ENCODE measurements at regions of chr16 and their contacts with region 1.

Region 1: DNA sequence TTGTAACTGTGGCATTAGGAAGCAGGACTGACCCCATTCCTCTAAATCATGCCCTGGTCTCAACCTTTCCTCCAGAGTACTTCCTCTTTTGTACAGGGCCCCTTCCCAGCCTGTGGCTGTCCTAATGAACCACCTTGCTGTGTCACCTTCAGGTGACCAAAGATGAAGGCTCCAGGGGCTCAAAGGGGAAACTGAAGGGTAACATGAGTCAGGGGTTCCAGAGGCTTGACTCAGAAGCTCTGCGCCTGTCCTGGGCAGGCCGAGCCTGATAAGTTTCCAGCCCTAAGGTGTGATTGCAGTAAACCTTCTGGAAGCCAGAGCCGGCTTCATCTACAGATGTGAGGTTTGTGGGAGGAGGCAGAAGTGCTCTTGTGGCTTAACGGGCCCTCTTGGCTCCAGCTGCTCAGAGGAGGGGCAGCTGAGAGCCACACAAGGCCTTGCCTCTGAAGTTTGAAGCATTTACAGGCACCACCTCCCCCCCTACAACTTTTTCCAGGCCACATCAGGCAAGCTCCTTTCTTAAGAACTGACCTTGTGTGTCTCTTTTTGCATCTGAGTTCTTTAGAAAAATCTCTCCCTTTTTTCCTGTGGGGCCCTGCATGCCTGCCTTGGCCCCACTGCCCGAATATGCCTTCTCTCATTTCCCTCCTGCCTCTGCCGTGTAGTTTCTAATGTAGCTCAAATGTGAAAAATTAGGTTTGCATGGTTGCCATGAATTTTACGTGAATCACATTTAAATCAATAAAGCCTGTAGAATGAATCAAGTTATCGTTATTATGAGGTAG is 149.9 kb downstream of the CLEC16A start:
- DNase-seq: peak; percentile 87
- ATAC-seq: peak; percentile 77
- H3K4me3 Mint-ChIP-seq: peak overlapping the region; percentile 53
- H3K27ac Mint-ChIP-seq: peak overlapping the region; percentile 99
- H3K4me1 Mint-ChIP-seq: peaks cover 86% of the 10 kb centered on the region
- H3K27me3 Mint-ChIP-seq: no peaks in the 10 kb centered on the region

Region 2: DNA sequence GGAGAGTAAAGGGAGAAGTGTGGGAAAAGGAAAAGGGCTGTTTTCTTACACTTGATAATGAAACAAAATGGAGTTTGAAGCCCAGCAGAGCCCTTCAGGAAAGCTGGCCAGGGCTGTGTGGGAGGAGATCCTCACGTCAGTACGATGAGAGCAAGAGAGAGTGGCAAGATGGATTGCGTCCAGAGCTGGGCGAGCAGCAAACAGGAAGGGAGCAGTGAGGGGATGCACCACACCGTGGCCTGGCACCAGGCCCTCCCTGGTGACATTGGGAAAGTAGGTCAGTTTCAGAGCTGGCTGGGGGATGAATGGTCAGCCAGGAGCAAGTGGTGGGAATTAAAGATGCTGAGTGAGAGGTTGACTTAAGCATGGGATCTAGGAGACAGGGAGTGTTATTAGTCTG is 1185.7 kb before region 1 on chr16:
- CTCF ChIA-PET with region 1: no interaction called
- POLR2A ChIA-PET with region 1: no interaction called
- intact Hi-C with region 1: no loop called
- DNase-seq: no peak
- ATAC-seq: no peak
- H3K4me3 Mint-ChIP-seq: no peak overlapping the region
- H3K27ac Mint-ChIP-seq: no peak overlapping the region
- H3K4me1 Mint-ChIP-seq: no peaks in the 10 kb centered on the region
- H3K27me3 Mint-ChIP-seq: peaks cover 2% of the 10 kb centered on the region

Region 3: DNA sequence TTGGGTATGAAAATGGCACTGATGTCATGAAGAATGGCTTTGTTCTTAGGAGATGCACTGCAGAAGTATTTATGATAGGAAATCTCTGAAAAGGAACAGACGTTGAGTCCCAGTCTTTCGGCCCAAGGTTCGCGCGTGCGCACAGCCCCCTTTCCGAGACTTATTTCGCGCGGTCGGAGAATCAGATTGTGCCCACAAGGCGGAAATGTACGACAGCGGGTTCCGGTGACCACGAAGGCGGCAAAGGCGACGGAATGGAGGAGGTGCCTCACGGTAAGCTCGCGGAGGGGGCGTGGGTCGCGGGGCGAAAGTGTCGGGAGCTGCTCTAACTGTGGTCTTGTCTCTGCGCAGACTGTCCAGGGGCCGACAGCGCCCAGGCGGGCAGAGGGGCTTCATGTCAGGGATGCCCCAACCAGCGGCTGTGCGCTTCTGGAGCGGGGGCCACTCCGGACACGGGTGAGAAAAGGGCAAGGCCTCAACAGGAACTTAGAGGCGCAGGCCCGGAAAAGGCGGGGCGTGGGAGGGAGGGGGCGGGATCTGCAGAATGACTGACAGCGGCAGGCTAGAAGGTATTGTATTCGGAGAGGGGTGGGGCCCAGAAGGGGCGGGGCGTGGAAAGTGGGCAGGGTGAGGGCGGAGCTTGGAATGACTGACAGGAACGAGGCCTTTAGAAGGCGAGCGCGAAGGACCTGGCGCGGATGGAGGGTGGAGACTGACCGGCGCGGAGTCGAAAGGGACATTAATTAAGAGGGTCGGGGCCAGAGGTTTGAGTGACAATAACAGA is 350.5 kb before region 1 on chr16 and contains the start of gene NUBP1:
- CTCF ChIA-PET with region 1: no interaction called
- POLR2A ChIA-PET with region 1: no interaction called
- intact Hi-C with region 1: loop called in 1 of 2 experiments (anchors 5 kb)
- DNase-seq: peak; percentile 100
- ATAC-seq: peak; percentile 95
- H3K4me3 Mint-ChIP-seq: peak within 1 kb of the TSS; percentile 75
- H3K27ac Mint-ChIP-seq: peak within 1 kb of the TSS; percentile 98
- H3K4me1 Mint-ChIP-seq: peaks cover 30% of the 10 kb centered on the region
- H3K27me3 Mint-ChIP-seq: no peaks in the 10 kb centered on the region
- total RNA-seq, gene NUBP1: 25.9 to 33.1 TPM

Region 4: DNA sequence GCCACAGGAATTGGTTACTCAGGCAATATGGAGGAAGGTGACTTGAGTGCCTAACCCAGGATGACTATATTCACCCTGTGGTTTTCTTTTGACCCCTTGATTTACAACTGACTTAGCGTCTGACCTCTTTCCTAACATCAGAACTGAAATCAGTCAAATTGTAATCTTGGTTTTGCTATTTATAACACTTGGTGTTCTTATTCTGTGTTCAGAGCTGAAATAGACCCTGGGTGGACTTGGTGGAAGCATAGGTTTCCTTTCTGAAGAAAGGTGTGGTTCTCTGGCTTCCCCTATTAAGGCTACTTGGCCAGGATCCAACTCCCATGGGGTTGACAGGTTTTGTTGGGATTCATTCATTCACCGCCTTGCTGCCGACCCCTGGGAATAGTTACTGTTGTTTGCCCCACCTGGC is 69.1 kb before region 1 on chr16:
- CTCF ChIA-PET with region 1: no interaction called
- POLR2A ChIA-PET with region 1: interaction called, 3 read pairs
- intact Hi-C with region 1: loop called in 1 of 2 experiments (anchors 1 kb)
- DNase-seq: peak; percentile 20
- ATAC-seq: peak; percentile 89
- H3K4me3 Mint-ChIP-seq: no peak overlapping the region
- H3K27ac Mint-ChIP-seq: peak overlapping the region; percentile 81
- H3K4me1 Mint-ChIP-seq: peaks cover 20% of the 10 kb centered on the region
- H3K27me3 Mint-ChIP-seq: no peaks in the 10 kb centered on the region

Region 5: GRCh38 chr16:11076259-11077018 is 17.8 kb before region 1 on chr16:
- CTCF ChIA-PET with region 1: interaction called, 7 read pairs
- POLR2A ChIA-PET with region 1: interaction called, 15 read pairs
- intact Hi-C with region 1: loop called (anchors 1 kb)
- DNase-seq: peak; percentile 87
- ATAC-seq: peak; percentile 69
- H3K4me3 Mint-ChIP-seq: peak overlapping the region; percentile 15
- H3K27ac Mint-ChIP-seq: peak overlapping the region; percentile 89
- H3K4me1 Mint-ChIP-seq: peaks cover 96% of the 10 kb centered on the region
- H3K27me3 Mint-ChIP-seq: no peaks in the 10 kb centered on the region

Region 6: GRCh38 chr16:11114366-11115164 is 20.3 kb after region 1 on chr16:
- CTCF ChIA-PET with region 1: interaction called, 4 read pairs
- POLR2A ChIA-PET with region 1: interaction called, 14 read pairs
- intact Hi-C with region 1: loop called in 1 of 2 experiments (anchors 1 kb)
- DNase-seq: peak; percentile 59
- ATAC-seq: peak; percentile 80
- H3K4me3 Mint-ChIP-seq: peak overlapping the region; percentile 44
- H3K27ac Mint-ChIP-seq: peak overlapping the region; percentile 85
- H3K4me1 Mint-ChIP-seq: peaks cover 57% of the 10 kb centered on the region
- H3K27me3 Mint-ChIP-seq: no peaks in the 10 kb centered on the region

Region 7: GRCh38 chr16:11356573-11357331 is 262.5 kb after region 1 on chr16:
- CTCF ChIA-PET with region 1: interaction called, 3 read pairs
- POLR2A ChIA-PET with region 1: no interaction called
- intact Hi-C with region 1: loop called (anchors 2 to 5 kb)
- DNase-seq: peak; percentile 79
- ATAC-seq: no peak
- H3K4me3 Mint-ChIP-seq: peak overlapping the region; percentile 46
- H3K27ac Mint-ChIP-seq: peak overlapping the region; percentile 23
- H3K4me1 Mint-ChIP-seq: peaks cover 67% of the 10 kb centered on the region
- H3K27me3 Mint-ChIP-seq: peaks cover 7% of the 10 kb centered on the region

Region 8: DNA sequence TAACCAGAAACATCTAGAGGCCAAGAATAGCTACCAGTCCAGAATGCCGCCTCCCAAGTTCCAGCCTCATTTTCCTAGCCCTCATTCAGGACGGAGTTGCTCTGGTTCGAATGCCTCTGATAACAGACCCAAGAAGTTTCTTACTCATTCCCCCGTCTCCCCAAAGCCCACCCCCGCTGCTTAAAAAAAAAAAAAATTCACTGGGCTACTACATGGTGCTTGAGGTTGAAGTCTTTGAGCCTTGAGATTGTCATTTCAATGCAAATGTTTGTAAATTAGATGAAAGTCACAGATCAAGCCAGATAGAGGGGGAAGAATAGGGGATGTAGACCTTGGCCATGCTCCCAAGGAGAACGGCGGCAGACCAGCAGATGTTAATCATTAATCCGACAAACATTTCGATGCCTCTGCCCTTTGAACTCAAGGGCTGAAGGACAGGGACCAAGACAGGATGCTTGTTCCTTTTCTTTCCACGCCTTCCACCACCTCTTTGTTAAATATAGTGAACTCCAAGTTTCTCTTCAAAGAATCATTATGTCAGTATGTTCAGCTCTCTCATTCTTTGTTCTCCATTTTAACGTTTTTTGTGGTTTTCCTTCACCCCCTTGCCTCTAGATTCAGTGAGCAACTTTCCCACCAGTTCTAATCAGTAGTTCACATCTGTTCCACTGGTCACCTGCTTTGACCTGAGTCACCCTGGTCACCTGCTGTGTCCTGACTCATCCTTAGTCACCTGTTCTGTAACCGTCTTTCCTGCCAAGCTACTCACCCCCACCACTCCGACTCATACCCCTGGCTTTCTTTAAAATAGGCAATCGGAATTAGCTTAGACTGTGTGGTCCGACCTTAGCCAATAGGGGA is 1519.1 kb after region 1 on chr16:
- CTCF ChIA-PET with region 1: no interaction called
- POLR2A ChIA-PET with region 1: no interaction called
- intact Hi-C with region 1: loop called in 1 of 2 experiments (anchors 5 kb)
- DNase-seq: peak; percentile 83
- ATAC-seq: peak; percentile 86
- H3K4me3 Mint-ChIP-seq: peak overlapping the region; percentile 49
- H3K27ac Mint-ChIP-seq: peak overlapping the region; percentile 89
- H3K4me1 Mint-ChIP-seq: peaks cover 50% of the 10 kb centered on the region
- H3K27me3 Mint-ChIP-seq: no peaks in the 10 kb centered on the region